Cardiac septum (tissue), 1 donor: ENCODE measurements at regions of chr6 and their contacts with region 1.

Region 1: GRCh38 chr6:14865531-14866100 is 380.3 kb upstream of the JARID2 start:
- DNase-seq: no peak

Region 2: GRCh38 chr6:14734416-14735340 is 130.9 kb before region 1 on chr6:
- intact Hi-C with region 1: no loop called
- DNase-seq: no peak

Region 3: GRCh38 chr6:14804785-14805210 is 60.8 kb before region 1 on chr6:
- intact Hi-C with region 1: loop called (anchors 5 kb)
- DNase-seq: peak; percentile 84

Region 4: GRCh38 chr6:14921878-14922671 is 56.5 kb after region 1 on chr6:
- intact Hi-C with region 1: no loop called
- DNase-seq: no peak